H1 (cell line): ENCODE measurements at regions of chr7 and their contacts with region 1.

Region 1: GRCh38 chr7:128335734-128336133 is 8.0 kb downstream of the RBM28 start:
- DNase-seq: no peak
- H3K4me3 ChIP-seq: no peak overlapping the region
- H3K27ac ChIP-seq: no peak overlapping the region
- H3K4me1 ChIP-seq: no peaks in the 10 kb centered on the region
- H3K27me3 ChIP-seq: no peaks in the 10 kb centered on the region
- CTCF ChIP-seq: no peak
- EP300 ChIP-seq: no peak
- POLR2A ChIP-seq: no peak
- RAD21 ChIP-seq: no peak

Region 2: DNA sequence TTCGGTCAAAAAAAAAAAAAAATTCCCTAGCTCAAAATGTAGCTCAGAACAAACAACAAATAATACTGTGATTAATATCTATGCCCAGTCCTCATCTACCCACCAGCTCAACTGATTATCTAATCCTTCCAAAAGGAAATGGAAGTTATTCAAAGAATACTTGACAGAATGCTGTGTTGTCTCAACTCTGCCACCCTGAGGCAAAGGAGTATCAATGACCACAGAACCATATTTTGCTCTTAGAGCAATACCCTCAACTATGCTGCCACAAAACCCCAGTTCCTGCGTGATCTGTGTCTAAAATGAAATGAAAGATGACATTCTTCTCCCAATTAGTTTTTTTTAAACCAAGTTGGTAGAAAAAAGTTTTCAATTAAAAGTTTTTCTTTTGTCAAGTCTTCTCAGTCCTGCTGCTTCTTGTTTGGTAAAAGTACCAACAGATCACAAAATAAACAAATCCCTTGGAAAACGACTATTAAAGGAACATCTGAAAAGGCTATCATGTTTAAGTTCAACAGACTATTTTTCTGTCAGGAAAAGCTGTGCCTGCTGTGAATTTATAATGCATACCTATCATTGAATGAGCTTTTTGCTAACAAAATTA is 13.6 kb before region 1 on chr7:
- CTCF ChIA-PET with region 1: interaction called, 23 read pairs
- POLR2A ChIA-PET with region 1: interaction called, 5 read pairs
- DNase-seq: no peak
- H3K4me3 ChIP-seq: no peak overlapping the region
- H3K27ac ChIP-seq: no peak overlapping the region
- H3K4me1 ChIP-seq: no peaks in the 10 kb centered on the region
- H3K27me3 ChIP-seq: no peaks in the 10 kb centered on the region
- CTCF ChIP-seq: peak in 2 of 3 experiments; percentile 50 to 54; a peak in 2 of 4 replicates
- EP300 ChIP-seq: no peak
- POLR2A ChIP-seq: no peak
- RAD21 ChIP-seq: peak; percentile 69 to 70

Region 3: DNA sequence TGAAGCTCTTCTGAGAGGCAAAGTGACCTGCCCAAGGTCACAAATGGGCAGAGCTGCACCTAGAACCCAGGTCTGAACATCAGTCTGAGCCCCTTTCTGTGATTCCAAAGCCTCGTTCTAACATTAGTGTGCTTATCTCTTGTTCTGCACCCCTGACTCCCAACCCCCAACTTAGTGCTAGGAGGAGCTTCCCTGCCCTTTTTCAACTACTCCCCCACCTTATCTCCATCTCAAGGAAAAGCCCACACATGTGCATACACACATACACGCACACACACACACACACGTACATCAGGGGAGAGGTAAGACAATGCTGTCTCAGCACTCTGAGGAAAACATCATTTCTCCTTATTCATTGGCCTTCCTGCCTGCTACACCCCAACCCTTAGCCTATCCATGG is 17.5 kb after region 1 on chr7:
- CTCF ChIA-PET with region 1: no interaction called
- POLR2A ChIA-PET with region 1: no interaction called
- DNase-seq: no peak
- H3K4me3 ChIP-seq: no peak overlapping the region
- H3K27ac ChIP-seq: no peak overlapping the region
- H3K4me1 ChIP-seq: peaks cover 0 to 7% (median 5%) of the 10 kb centered on the region in 4 experiments; a peak in 6 of 7 replicates
- H3K27me3 ChIP-seq: peaks cover 34 to 70% (median 57%) of the 10 kb centered on the region in 4 experiments
- CTCF ChIP-seq: no peak
- EP300 ChIP-seq: no peak
- POLR2A ChIP-seq: no peak
- RAD21 ChIP-seq: no peak